K562 (cell line): ENCODE measurements at regions of chr12 and their contacts with region 1.

Region 1: GRCh38 chr12:56007564-56008559 is 10.8 kb downstream of the SUOX start:
- DNase-seq: peak; percentile 64 to 96 (median 92)
- ATAC-seq: peak; percentile 84
- H3K4me3 ChIP-seq: peak overlapping the region; percentile 68
- H3K27ac ChIP-seq: peak overlapping the region; percentile 80
- H3K4me1 ChIP-seq: peaks cover 27 to 33% of the 10 kb centered on the region in 2 experiments
- H3K27me3 ChIP-seq: no peaks in the 10 kb centered on the region
- CTCF ChIP-seq: no peak
- EP300 ChIP-seq: no peak
- POLR2A ChIP-seq: no peak
- RAD21 ChIP-seq: no peak

Region 2: DNA sequence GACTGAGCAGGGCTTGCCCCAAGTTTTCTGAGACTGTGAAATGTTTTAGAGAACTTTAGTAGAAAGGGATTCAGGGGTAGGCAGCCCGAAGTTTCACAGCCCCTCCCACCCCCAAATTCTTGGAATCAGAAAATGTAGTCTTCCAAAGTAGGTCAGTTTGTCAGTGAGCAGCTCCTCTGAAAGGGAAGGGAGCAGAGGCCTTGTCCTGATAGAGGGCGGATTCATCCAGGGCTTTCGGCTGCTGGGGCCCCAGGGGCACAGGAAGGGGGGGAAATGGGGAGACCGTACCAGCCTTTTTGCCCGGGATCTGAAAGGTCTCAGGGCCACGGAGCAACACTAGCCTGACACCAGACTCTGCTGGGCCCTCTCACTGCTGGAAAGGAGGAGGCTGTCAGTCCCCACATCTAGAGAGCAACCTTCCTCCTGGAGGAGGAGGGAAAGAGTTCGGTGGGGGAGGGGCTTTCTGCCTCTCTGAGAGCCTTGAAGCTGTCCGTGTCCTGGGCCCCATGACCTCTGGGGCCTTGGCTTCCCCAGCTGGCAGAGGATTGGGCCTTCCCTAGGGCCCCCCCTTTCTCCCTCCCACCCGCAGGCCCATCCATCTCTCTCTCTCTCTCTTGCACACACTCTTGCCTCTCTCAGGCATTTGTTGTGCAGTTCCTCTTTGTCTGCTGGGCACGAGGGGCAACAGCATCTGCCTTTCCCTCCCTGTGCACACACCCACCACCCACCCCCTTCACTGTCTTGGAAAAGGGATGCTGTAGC is 12.7 kb after region 1 on chr12 and contains the start of gene IKZF4:
- CTCF ChIA-PET with region 1: no interaction called
- POLR2A ChIA-PET with region 1: interaction called, 28 read pairs
- in situ Hi-C with region 1: no loop called
- intact Hi-C with region 1: loop called (anchors 1 kb)
- DNase-seq: peak; percentile 76 to 95 (median 81)
- ATAC-seq: peak; percentile 79
- H3K4me3 ChIP-seq: peak within 1 kb of the TSS; percentile 46
- H3K27ac ChIP-seq: peak within 1 kb of the TSS; percentile 82
- H3K4me1 ChIP-seq: peaks cover 27 to 41% of the 10 kb centered on the region in 2 experiments
- H3K27me3 ChIP-seq: no peaks in the 10 kb centered on the region
- CTCF ChIP-seq: no peak
- EP300 ChIP-seq: no peak; the same call in 1 of the 2 replicates
- POLR2A ChIP-seq: no peak; the same call in 1 of the 2 replicates
- RAD21 ChIP-seq: 0 out of 4 replicates have a peak, but pooled peaks of 1 of the 2 experiments have one; percentile 7
- polyA plus RNA-seq, gene IKZF4: 2.8 to 3.6 TPM

Region 3: GRCh38 chr12:56143870-56144269 is 136.0 kb after region 1 on chr12:
- CTCF ChIA-PET with region 1: no interaction called
- POLR2A ChIA-PET with region 1: no interaction called
- in situ Hi-C with region 1: no loop called
- intact Hi-C with region 1: no loop called
- DNase-seq: no peak
- ATAC-seq: no peak
- H3K4me3 ChIP-seq: no peak overlapping the region
- H3K27ac ChIP-seq: no peak overlapping the region
- H3K4me1 ChIP-seq: peaks cover 2 to 4% of the 10 kb centered on the region in 2 experiments; a peak in 2 of 5 replicates
- H3K27me3 ChIP-seq: no peaks in the 10 kb centered on the region
- CTCF ChIP-seq: no peak
- EP300 ChIP-seq: no peak
- POLR2A ChIP-seq: no peak; the same call in 1 of the 2 replicates
- RAD21 ChIP-seq: no peak